H1 (cell line): ENCODE measurements at regions of chr3 and their contacts with region 1.

Region 1: GRCh38 chr3:52481819-52482521 is 13.2 kb upstream of the STAB1 start:
- DNase-seq: peak; percentile 51 to 93
- H3K4me3 ChIP-seq: no peak overlapping the region
- H3K27ac ChIP-seq: no peak overlapping the region
- H3K4me1 ChIP-seq: no peaks in the 10 kb centered on the region
- H3K27me3 ChIP-seq: no peaks in the 10 kb centered on the region
- CTCF ChIP-seq: peak in 2 of 3 experiments; percentile 82 to 98; a peak in 3 of 4 replicates
- EP300 ChIP-seq: no peak
- POLR2A ChIP-seq: no peak
- RAD21 ChIP-seq: peak; percentile 62 to 71

Region 2: GRCh38 chr3:52498137-52499054 is 16.4 kb after region 1 on chr3:
- CTCF ChIA-PET with region 1: interaction called, 15 read pairs
- POLR2A ChIA-PET with region 1: interaction called, 5 read pairs
- DNase-seq: no peak
- H3K4me3 ChIP-seq: no peak overlapping the region
- H3K27ac ChIP-seq: no peak overlapping the region
- H3K4me1 ChIP-seq: peaks cover 0 to 6% (median under 1%) of the 10 kb centered on the region in 4 experiments; a peak in 3 of 7 replicates
- H3K27me3 ChIP-seq: no peaks in the 10 kb centered on the region; a peak in 2 of 7 replicates
- CTCF ChIP-seq: no peak
- EP300 ChIP-seq: no peak
- POLR2A ChIP-seq: no peak
- RAD21 ChIP-seq: no peak

Region 3: GRCh38 chr3:52503788-52504424 is 21.9 kb after region 1 on chr3:
- CTCF ChIA-PET with region 1: interaction called, 15 read pairs
- POLR2A ChIA-PET with region 1: no interaction called
- DNase-seq: no peak
- H3K4me3 ChIP-seq: no peak overlapping the region
- H3K27ac ChIP-seq: no peak overlapping the region
- H3K4me1 ChIP-seq: peaks cover 0 to 9% (median 5%) of the 10 kb centered on the region in 4 experiments; a peak in 4 of 7 replicates
- H3K27me3 ChIP-seq: no peaks in the 10 kb centered on the region; a peak in 1 of 7 replicates
- CTCF ChIP-seq: peak in 1 of 3 experiments; percentile 4; a peak in 1 of 4 replicates
- EP300 ChIP-seq: no peak
- POLR2A ChIP-seq: no peak
- RAD21 ChIP-seq: no peak

Region 4: GRCh38 chr3:52509753-52510328 is 27.9 kb after region 1 on chr3:
- CTCF ChIA-PET with region 1: interaction called, 10 read pairs
- POLR2A ChIA-PET with region 1: interaction called, 3 read pairs
- DNase-seq: no peak
- H3K4me3 ChIP-seq: no peak overlapping the region
- H3K27ac ChIP-seq: no peak overlapping the region
- H3K4me1 ChIP-seq: peaks cover 0 to 4% (median 0%) of the 10 kb centered on the region in 4 experiments; a peak in 1 of 7 replicates
- H3K27me3 ChIP-seq: no peaks in the 10 kb centered on the region
- CTCF ChIP-seq: peak in 1 of 3 experiments; percentile 12; a peak in 1 of 4 replicates
- EP300 ChIP-seq: no peak
- POLR2A ChIP-seq: no peak
- RAD21 ChIP-seq: 0 out of 4 replicates have a peak, but pooled peaks of 1 of the 2 experiments have one; percentile 22

Region 5: GRCh38 chr3:52518720-52519444 is 36.9 kb after region 1 on chr3:
- CTCF ChIA-PET with region 1: interaction called, 20 read pairs
- POLR2A ChIA-PET with region 1: no interaction called
- DNase-seq: peak in 1 of 2 experiments; percentile 84
- H3K4me3 ChIP-seq: peak overlapping the region; percentile 31 to 60 (median 34)
- H3K27ac ChIP-seq: no peak overlapping the region
- H3K4me1 ChIP-seq: peaks cover 0 to 6% (median 4%) of the 10 kb centered on the region in 4 experiments; a peak in 5 of 7 replicates
- H3K27me3 ChIP-seq: peaks cover 0 to 11% (median 4%) of the 10 kb centered on the region in 4 experiments; a peak in 5 of 7 replicates
- CTCF ChIP-seq: no peak
- EP300 ChIP-seq: no peak
- POLR2A ChIP-seq: no peak
- RAD21 ChIP-seq: no peak

Region 6: DNA sequence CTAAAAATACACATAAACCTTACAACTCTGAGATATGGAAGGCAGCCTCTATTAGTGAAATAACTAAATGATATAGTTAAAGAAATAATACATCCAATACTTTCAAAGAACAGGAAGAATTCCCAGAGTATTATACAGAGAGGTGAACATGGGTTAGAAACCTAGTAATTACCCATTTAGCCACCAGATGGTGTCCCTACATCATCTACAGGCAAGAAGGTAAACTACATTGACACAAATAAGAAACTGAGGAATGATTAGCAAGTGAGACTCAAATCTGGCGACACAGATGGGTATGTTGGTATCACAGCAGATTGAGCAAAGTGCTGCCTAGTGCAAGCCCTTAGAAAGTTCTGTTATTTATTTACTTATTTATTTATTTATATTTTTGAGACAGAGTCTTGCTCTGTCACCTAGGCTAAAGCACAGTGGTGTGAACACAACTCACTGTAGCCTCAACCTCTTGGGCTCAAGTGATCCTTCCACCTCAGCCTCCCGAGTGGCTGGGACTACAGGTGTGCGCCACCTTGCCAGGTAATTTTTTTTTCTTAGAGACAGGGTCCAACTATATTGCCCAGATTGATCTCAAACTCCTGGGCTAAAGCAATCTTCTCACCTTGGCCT is 260.6 kb after region 1 on chr3:
- CTCF ChIA-PET with region 1: no interaction called
- POLR2A ChIA-PET with region 1: no interaction called
- DNase-seq: no peak
- H3K4me3 ChIP-seq: no peak overlapping the region
- H3K27ac ChIP-seq: no peak overlapping the region
- H3K4me1 ChIP-seq: no peaks in the 10 kb centered on the region
- H3K27me3 ChIP-seq: no peaks in the 10 kb centered on the region
- CTCF ChIP-seq: peak in 2 of 3 experiments; percentile 44 to 49; a peak in 2 of 4 replicates
- EP300 ChIP-seq: no peak
- POLR2A ChIP-seq: no peak
- RAD21 ChIP-seq: peak; percentile 65 to 68